Naive thymus-derived CD8-positive, alpha-beta T cell (primary cell): ENCODE measurements at regions of chr13 and their contacts with region 1.

Region 1: GRCh38 chr13:26221721-26222519 is at the start of gene RNF6:
- DNase-seq: peak; percentile 71 to 95 (median 87)
- ATAC-seq: peak; percentile 93 to 95
- H3K4me3 Mint-ChIP-seq: peak within 1 kb of the TSS; percentile 91 to 100 (median 98)
- H3K27ac Mint-ChIP-seq: peak within 1 kb of the TSS; percentile 92 to 100 (median 100)
- H3K4me1 Mint-ChIP-seq: peaks cover 9 to 43% (median 41%) of the 10 kb centered on the region in 4 donors
- H3K27me3 Mint-ChIP-seq: no peaks in the 10 kb centered on the region
- polyA plus RNA-seq, gene RNF6: 23.8 to 40.1 (median 25.2) TPM

Region 2: GRCh38 chr13:26095338-26095737 is 126.6 kb before region 1 on chr13:
- POLR2A ChIA-PET with region 1: no interaction called
- DNase-seq: no peak
- ATAC-seq: no peak
- H3K4me3 Mint-ChIP-seq: no peak overlapping the region
- H3K27ac Mint-ChIP-seq: no peak overlapping the region
- H3K4me1 Mint-ChIP-seq: no peaks in the 10 kb centered on the region
- H3K27me3 Mint-ChIP-seq: peaks cover 16 to 40% (median 28%) of the 10 kb centered on the region in 5 donors

Region 3: GRCh38 chr13:26253787-26254582 is 32.1 kb after region 1 on chr13 and contains the start of gene CDK8:
- POLR2A ChIA-PET with region 1: interaction called, 26 read pairs
- DNase-seq: peak; percentile 77 to 99 (median 88)
- ATAC-seq: peak; percentile 86 to 87
- H3K4me3 Mint-ChIP-seq: peak within 1 kb of the TSS; percentile 88 to 98 (median 93)
- H3K27ac Mint-ChIP-seq: peak within 1 kb of the TSS; percentile 83 to 94 (median 90)
- H3K4me1 Mint-ChIP-seq: peaks cover 14 to 43% (median 37%) of the 10 kb centered on the region in 4 donors
- H3K27me3 Mint-ChIP-seq: no peaks in the 10 kb centered on the region
- polyA plus RNA-seq, gene CDK8: 4.7 to 7.1 (median 6.8) TPM

Region 4: DNA sequence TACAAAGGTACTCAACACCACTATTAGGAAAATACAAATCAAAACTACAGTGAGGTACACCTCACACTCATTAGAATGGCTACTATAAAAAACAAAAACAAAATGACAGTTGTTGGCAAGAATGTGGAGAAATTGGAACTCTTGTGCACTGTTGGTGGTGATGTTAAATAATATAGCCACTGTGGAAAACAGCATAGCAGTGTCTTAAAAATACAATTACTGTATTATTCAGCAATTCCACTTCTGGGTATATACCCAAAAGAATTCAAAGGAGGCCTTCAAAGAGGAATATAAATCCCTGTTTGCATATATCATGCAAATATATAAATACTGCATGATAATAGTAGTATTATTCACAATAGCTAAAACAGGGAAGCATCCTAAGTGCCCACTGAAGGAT is 98.8 kb after region 1 on chr13:
- POLR2A ChIA-PET with region 1: no interaction called
- DNase-seq: no peak
- ATAC-seq: no peak
- H3K4me3 Mint-ChIP-seq: no peak overlapping the region
- H3K27ac Mint-ChIP-seq: peak overlapping the region in 1 of 10 donors; percentile 30
- H3K4me1 Mint-ChIP-seq: peaks cover 21 to 60% (median 49%) of the 10 kb centered on the region in 4 donors
- H3K27me3 Mint-ChIP-seq: no peaks in the 10 kb centered on the region

Region 5: GRCh38 chr13:26335158-26335557 is 113.2 kb after region 1 on chr13:
- POLR2A ChIA-PET with region 1: no interaction called
- DNase-seq: no peak
- ATAC-seq: no peak
- H3K4me3 Mint-ChIP-seq: no peak overlapping the region
- H3K27ac Mint-ChIP-seq: peak overlapping the region in 1 of 10 donors; percentile 6
- H3K4me1 Mint-ChIP-seq: peaks cover 20 to 41% (median 33%) of the 10 kb centered on the region in 4 donors
- H3K27me3 Mint-ChIP-seq: no peaks in the 10 kb centered on the region